GM23248 (cell line): ENCODE measurements at regions of chr13 and their contacts with region 1.

Region 1: DNA sequence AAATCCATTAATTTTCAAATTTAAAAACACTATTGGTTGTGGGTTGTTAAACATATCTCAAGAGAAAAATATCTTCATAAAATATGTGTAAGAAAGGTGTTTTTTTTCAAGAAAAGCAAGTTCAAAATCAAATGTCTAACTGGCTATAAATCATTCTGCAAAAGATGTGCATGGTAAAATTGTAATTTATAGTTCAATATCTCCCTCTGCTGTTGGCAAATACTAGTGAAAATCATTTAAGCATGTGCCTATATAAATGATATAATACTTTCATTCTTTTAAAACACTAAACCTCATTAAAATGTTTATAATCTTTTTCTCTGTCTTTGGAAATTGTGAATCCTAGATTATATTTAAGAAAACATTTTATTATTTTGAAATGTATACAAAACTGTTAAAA is 17.2 kb upstream of the SLITRK6 start:
- DNase-seq: no peak
- H3K4me3 ChIP-seq: no peak overlapping the region
- H3K27ac ChIP-seq: no peak overlapping the region
- H3K4me1 ChIP-seq: no peaks in the 10 kb centered on the region
- H3K27me3 ChIP-seq: no peaks in the 10 kb centered on the region

Region 2: GRCh38 chr13:84902243-84902642 is 914.2 kb before region 1 on chr13:
- in situ Hi-C with region 1: loop called (anchors 10 kb)
- DNase-seq: no peak
- H3K4me3 ChIP-seq: no peak overlapping the region
- H3K27ac ChIP-seq: no peak overlapping the region
- H3K4me1 ChIP-seq: no peaks in the 10 kb centered on the region
- H3K27me3 ChIP-seq: no peaks in the 10 kb centered on the region

Region 3: DNA sequence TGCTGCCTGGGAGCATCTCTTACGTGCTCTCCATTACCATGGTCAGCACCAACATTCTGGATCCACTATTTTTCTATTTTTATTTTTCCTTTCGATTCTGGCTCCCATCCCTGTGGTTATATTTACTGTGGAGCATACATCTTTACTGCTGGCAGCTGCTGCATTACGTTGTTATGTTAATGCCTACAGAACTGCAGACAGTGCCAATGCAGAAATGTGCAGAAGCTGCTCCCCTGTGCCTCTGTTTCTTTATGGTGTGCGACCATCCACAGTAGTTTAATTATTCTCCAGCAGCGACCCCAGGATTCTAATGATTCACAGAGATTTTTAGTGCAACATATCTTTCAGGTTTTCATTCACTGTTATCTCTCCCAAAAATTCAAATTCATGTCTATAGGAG is 894.5 kb after region 1 on chr13:
- in situ Hi-C with region 1: no loop called
- DNase-seq: no peak
- H3K4me3 ChIP-seq: no peak overlapping the region
- H3K27ac ChIP-seq: no peak overlapping the region
- H3K4me1 ChIP-seq: no peaks in the 10 kb centered on the region
- H3K27me3 ChIP-seq: no peaks in the 10 kb centered on the region